Heart right ventricle (tissue), 16 donors: ENCODE measurements at regions of chr9 and their contacts with region 1.

Region 1: GRCh38 chr9:12775679-12776512 is 1.1 kb downstream of the LURAP1L start:
- DNase-seq: peak; percentile 5 to 45
- ATAC-seq: peak; percentile 61 to 97 (median 94)
- H3K4me3 ChIP-seq: peak overlapping the region; percentile 70 to 91 (median 83)
- H3K27ac ChIP-seq: peak overlapping the region; percentile 84 to 93 (median 86)
- H3K4me1 ChIP-seq: peaks cover 0 to 36% (median 17%) of the 10 kb centered on the region in 9 donors
- H3K27me3 ChIP-seq: peaks cover 0 to 19% (median 0%) of the 10 kb centered on the region in 7 donors
- CTCF ChIP-seq: peak in 8 of 9 donors; percentile 24 to 70 (median 55)

Region 2: DNA sequence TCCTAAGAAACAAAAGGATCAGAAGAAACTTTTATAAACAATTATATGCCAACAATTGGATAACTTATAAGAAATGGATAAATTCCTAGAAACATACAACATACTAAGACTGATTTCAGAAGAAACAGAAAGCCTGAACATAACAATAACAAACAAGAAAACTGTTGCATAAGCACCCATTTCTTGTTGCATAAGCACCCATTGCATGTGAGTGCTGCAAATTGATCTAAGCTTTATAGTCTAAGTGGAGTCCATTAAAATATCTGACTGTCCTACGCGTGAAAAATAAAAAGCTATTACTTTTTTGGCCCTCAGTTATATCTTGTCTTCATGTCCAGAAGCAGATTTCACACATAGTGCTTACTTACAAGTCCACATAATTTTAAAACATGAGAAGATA is 63.4 kb before region 1 on chr9:
- intact Hi-C with region 1: no loop called
- DNase-seq: no peak
- ATAC-seq: no peak
- H3K4me3 ChIP-seq: no peak overlapping the region
- H3K27ac ChIP-seq: no peak overlapping the region
- H3K4me1 ChIP-seq: no peaks in the 10 kb centered on the region
- H3K27me3 ChIP-seq: no peaks in the 10 kb centered on the region
- CTCF ChIP-seq: no peak

Region 3: DNA sequence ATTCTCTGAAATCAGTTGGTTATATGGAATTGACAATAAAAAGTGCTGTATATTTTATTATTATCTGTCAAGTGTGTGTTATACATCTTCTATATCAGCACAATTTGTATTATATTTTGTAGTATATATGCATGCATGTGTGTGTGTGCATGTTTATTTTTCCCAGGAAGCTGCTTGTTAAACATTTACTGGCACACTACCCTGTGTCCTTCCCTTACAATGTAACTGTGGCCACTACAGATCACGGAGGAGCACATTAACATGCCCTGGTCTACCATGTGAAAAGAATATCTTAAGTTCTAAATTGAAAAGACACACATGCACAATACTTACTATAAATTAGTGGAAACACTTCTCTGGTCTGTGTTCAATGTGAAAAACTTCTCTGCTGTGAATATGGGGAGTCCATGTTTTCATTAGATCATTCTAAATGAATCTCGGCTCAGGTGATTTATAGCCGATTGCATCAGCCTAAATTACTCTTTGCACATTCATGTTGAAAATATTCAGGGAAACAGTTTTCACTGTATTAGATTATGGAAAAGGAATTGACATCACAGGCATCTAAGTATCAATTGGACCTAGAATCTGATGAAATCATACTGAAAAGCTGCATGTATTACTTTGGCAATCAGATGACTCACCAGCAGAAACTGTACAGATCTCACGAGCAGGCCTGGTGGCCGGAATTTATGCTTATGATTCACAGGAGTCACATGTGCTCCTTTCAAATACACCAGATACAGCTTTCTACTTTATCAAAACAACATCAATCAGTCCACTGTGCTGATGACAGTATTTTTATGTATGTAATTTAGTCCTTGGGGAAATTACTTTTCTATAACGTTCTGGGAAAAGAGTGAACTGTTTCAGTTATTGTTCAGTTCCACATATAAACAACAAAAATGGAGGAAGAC is 38.3 kb after region 1 on chr9:
- intact Hi-C with region 1: loop called in 4 of 10 experiments (anchors 2 to 5 kb)
- DNase-seq: peak; percentile 11 to 15
- ATAC-seq: peak in 7 of 8 donors; percentile 59 to 93 (median 84)
- H3K4me3 ChIP-seq: peak overlapping the region in 4 of 10 donors; percentile 1 to 31 (median 12)
- H3K27ac ChIP-seq: peak overlapping the region in 7 of 10 donors; percentile 17 to 67 (median 49)
- H3K4me1 ChIP-seq: peaks cover 0 to 54% (median 20%) of the 10 kb centered on the region in 9 donors
- H3K27me3 ChIP-seq: no peaks in the 10 kb centered on the region
- CTCF ChIP-seq: peak in 3 of 9 donors; percentile 26 to 47 (median 41)

Region 4: GRCh38 chr9:12819436-12820185 is 43.7 kb after region 1 on chr9:
- intact Hi-C with region 1: loop called in 4 of 10 experiments (anchors 2 to 5 kb)
- DNase-seq: no peak
- ATAC-seq: no peak
- H3K4me3 ChIP-seq: no peak overlapping the region
- H3K27ac ChIP-seq: peak overlapping the region in 2 of 10 donors; percentile 2 to 56
- H3K4me1 ChIP-seq: peaks cover 0 to 25% (median 14%) of the 10 kb centered on the region in 9 donors
- H3K27me3 ChIP-seq: no peaks in the 10 kb centered on the region
- CTCF ChIP-seq: peak; percentile 15 to 48 (median 30)

Region 5: DNA sequence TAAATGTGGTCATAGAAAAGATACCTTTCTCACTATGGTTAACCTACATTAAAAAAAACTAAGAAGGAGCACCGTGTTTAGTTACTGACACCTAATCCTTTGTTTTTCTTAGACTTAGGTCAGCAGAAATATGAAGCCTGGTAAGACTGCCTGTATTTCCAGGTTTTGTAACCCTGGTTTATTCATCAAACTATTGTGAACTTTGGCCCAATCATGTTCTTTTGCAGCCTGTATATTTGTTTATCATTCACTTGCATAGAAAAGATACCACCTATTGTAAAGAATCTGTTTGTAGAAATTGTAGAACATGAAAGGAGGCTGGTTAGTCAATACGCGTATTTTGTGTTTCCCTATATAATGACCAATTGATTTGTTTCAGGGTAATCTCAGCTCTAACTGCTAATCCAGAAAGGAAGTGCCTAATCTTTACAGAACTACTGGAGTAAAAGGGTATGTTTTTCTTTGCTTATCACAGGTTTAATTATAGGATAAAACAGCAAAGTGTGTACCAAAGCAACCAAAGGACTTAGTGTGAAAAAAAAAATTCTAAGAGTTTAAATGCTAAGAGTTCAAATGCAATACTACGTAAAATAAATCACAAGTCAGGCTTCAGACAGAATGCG is 102.6 kb after region 1 on chr9:
- intact Hi-C with region 1: loop called in 5 of 10 experiments (anchors 2 to 5 kb)
- DNase-seq: no peak
- ATAC-seq: no peak
- H3K4me3 ChIP-seq: no peak overlapping the region
- H3K27ac ChIP-seq: no peak overlapping the region
- H3K4me1 ChIP-seq: peaks cover 0 to 47% (median 10%) of the 10 kb centered on the region in 9 donors
- H3K27me3 ChIP-seq: no peaks in the 10 kb centered on the region
- CTCF ChIP-seq: no peak